Activated CD8-positive, alpha-beta T cell treated with anti-CD3 and anti-CD28 coated beads, Interleukin-2, amount 10 ng/mL, durations not matched to agents 7 days and 5 days (primary cell): ENCODE measurements at regions of chr12 and their contacts with region 1.

Region 1: DNA sequence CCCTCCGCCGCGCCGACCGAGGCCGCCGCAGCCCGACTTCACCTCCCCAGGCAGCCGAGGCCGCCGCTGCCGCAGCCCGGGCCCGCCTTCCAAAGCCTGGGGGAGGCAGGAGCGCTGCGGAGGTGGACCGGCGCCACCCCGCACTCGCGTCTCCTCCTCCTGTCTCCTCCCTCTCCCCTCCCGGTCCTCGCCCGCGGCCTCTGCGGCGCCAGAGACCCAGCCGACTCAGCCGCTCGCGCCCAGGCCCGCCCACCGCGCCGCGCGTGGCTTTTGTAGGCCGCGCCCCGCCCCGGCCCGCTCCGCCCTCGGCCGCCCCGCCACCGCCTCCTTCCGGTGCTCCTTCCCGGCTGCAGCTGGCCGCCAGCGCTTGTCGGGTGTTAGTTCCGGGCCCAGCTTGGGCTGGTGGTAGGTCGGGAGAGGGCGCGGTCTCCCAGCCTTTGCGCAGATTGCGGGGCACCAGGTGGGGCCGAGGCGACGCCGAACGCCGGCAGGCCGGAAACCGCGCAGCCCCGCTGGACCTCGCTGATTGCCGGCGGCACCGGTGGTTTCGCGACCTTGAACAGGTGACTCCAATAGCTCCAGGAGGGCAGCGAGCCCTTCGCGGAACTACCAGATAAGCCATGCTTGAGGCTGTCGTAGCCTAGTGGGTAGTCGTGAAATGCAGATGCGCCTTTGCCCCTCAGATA is at the start of gene CAPRIN2:
- DNase-seq: peak; percentile 93
- ATAC-seq: peak; percentile 94
- H3K4me3 Mint-ChIP-seq: peak within 1 kb of the TSS; percentile 87
- H3K27ac Mint-ChIP-seq: peak within 1 kb of the TSS; percentile 82
- H3K4me1 Mint-ChIP-seq: peaks cover 17% of the 10 kb centered on the region
- H3K27me3 Mint-ChIP-seq: peaks cover 4% of the 10 kb centered on the region
- total RNA-seq, gene CAPRIN2: 8.9 to 10.7 TPM

Region 2: DNA sequence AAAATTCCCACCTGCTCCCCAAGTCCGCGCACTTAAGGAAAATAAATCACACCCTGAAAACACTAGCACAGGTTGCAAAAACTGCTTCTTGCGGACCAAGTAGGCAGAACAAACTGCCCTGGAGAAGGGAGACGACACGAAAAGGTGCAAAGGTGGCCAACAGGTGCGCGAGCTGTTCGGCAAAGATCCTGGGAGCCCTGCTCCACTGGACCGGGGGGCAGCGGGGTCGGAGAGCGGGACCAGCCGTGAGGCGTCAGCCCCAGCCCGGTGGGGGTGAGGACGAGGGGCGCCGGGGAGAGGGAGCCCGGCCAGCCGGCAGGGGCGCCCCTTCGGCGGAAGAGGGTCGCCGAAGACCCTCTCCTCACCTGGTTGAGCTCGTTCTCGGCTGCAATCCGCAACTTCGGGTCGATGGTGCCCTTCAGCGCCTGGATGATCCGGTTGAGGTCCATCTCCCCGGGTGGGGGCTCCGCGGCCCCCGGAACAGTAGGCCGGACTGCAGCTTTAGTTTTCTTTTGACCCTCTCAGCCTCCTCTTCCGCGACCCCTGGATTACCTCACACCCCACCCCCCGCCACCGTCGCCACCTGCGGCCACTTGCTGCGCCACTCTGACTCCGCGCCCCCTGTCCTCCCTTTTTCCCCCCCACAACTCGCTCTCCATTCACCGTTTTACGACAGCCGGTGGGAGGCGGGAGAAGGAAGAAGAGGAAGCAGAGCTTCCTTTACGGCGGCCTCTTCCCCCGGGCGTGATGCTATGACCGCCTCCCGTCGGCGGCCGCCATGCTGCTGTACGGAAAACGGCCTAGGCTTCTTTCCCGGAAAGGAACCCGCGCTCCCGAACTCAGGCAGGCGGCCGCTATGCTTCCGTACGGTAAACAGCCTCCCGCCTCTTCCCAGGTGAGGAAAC is 59.4 kb before region 1 on chr12 and contains the start of gene IPO8:
- CTCF ChIA-PET with region 1: interaction called, 14 read pairs
- POLR2A ChIA-PET with region 1: interaction called, 21 read pairs
- DNase-seq: peak; percentile 87
- ATAC-seq: peak; percentile 92
- H3K4me3 Mint-ChIP-seq: peak within 1 kb of the TSS; percentile 92
- H3K27ac Mint-ChIP-seq: peak within 1 kb of the TSS; percentile 91
- H3K4me1 Mint-ChIP-seq: peaks cover 31% of the 10 kb centered on the region
- H3K27me3 Mint-ChIP-seq: peaks cover 11% of the 10 kb centered on the region
- total RNA-seq, gene IPO8: 50.8 to 52.2 TPM

Region 3: DNA sequence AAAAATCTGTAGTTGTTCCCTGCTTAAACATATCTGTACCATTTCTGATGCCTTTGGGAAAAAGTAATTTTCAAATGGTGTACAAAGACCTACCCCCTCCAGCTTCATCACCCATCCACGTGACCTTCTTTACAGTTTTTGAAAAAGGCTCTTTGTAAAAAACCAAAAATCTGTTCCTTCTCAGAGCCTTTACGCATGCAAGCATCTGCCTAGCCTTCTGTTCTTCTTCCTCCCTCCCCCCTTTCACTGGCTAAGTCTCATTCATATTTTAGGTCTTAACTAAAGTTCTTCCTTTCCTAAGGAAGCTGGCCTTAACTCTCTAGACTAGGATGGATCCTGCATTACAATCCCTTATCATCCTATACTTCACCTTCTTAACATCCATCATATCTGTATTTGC is 10.5 kb before region 1 on chr12:
- CTCF ChIA-PET with region 1: interaction called, 13 read pairs
- POLR2A ChIA-PET with region 1: no interaction called
- DNase-seq: no peak
- ATAC-seq: no peak
- H3K4me3 Mint-ChIP-seq: no peak overlapping the region
- H3K27ac Mint-ChIP-seq: no peak overlapping the region
- H3K4me1 Mint-ChIP-seq: no peaks in the 10 kb centered on the region
- H3K27me3 Mint-ChIP-seq: no peaks in the 10 kb centered on the region

Region 4: GRCh38 chr12:30795410-30796312 is 40.8 kb after region 1 on chr12:
- CTCF ChIA-PET with region 1: interaction called, 11 read pairs
- POLR2A ChIA-PET with region 1: interaction called, 8 read pairs
- DNase-seq: peak; percentile 81
- ATAC-seq: peak; percentile 89
- H3K4me3 Mint-ChIP-seq: peak overlapping the region; percentile 80
- H3K27ac Mint-ChIP-seq: peak overlapping the region; percentile 77
- H3K4me1 Mint-ChIP-seq: peaks cover 27% of the 10 kb centered on the region
- H3K27me3 Mint-ChIP-seq: peaks cover 46% of the 10 kb centered on the region

Region 5: GRCh38 chr12:30806989-30807694 is 52.3 kb after region 1 on chr12:
- CTCF ChIA-PET with region 1: interaction called, 11 read pairs
- POLR2A ChIA-PET with region 1: no interaction called
- DNase-seq: peak; percentile 30
- ATAC-seq: peak; percentile 60
- H3K4me3 Mint-ChIP-seq: no peak overlapping the region
- H3K27ac Mint-ChIP-seq: no peak overlapping the region
- H3K4me1 Mint-ChIP-seq: no peaks in the 10 kb centered on the region
- H3K27me3 Mint-ChIP-seq: peaks cover 30% of the 10 kb centered on the region

Region 6: GRCh38 chr12:30830751-30831150 is 75.9 kb after region 1 on chr12:
- CTCF ChIA-PET with region 1: no interaction called
- POLR2A ChIA-PET with region 1: no interaction called
- DNase-seq: no peak
- ATAC-seq: no peak
- H3K4me3 Mint-ChIP-seq: no peak overlapping the region
- H3K27ac Mint-ChIP-seq: no peak overlapping the region
- H3K4me1 Mint-ChIP-seq: no peaks in the 10 kb centered on the region
- H3K27me3 Mint-ChIP-seq: peaks cover 7% of the 10 kb centered on the region